GM12878 (cell line): ENCODE measurements at regions of chr7 and their contacts with region 1.

Region 1: DNA sequence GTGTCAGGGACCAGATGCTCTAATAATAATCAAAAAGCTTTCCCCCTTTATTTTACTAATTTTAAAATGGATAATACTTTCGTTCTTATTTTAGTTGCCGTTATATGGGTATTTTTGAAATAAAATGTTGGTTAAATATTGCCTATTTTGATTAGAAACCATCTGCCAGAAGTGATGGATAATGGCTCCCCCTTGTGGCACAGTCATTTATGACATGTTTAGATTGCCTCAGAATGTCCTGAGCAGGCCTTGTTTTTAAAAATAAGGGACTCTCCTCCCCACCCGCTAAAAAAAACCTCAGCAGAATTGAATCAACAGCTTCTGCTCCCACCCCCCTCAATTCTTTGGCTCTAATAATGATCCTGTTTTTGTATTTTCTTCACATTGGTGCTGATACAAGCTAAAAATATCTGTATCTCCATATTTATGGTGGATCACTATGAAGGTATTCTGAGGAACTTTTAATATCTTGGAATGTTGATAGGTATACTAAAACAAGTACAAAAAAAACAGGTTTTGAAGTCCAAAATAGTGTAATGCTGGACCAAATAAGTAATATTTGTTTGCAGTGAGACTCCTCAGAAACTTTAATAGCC is 38.8 kb downstream of the TMEM60 start:
- DNase-seq: peak; percentile 38
- ATAC-seq: peak; percentile 83
- H3K4me3 ChIP-seq: no peak overlapping the region
- H3K27ac ChIP-seq: no peak overlapping the region
- H3K4me1 ChIP-seq: peaks cover 3% of the 10 kb centered on the region; the same call in 1 of the 2 replicates
- H3K27me3 ChIP-seq: no peaks in the 10 kb centered on the region
- CTCF ChIP-seq: peak; percentile 61 to 79 (median 78)
- EP300 ChIP-seq: no peak
- POLR2A ChIP-seq: no peak
- RAD21 ChIP-seq: peak; percentile 96

Region 2: GRCh38 chr7:77674878-77675277 is 84.5 kb before region 1 on chr7:
- CTCF ChIA-PET with region 1: interaction called, 5 read pairs
- POLR2A ChIA-PET with region 1: no interaction called
- RAD21 ChIA-PET with region 1: interaction called, 6 read pairs
- SMC1A ChIA-PET with region 1: interaction called, 8 read pairs
- in situ Hi-C with region 1: no loop called
- intact Hi-C with region 1: loop called (anchors 5 kb)
- DNase-seq: no peak
- ATAC-seq: peak; percentile 74
- H3K4me3 ChIP-seq: no peak overlapping the region
- H3K27ac ChIP-seq: no peak overlapping the region
- H3K4me1 ChIP-seq: no peaks in the 10 kb centered on the region
- H3K27me3 ChIP-seq: no peaks in the 10 kb centered on the region
- CTCF ChIP-seq: no peak
- EP300 ChIP-seq: no peak
- POLR2A ChIP-seq: no peak
- RAD21 ChIP-seq: no peak

Region 3: GRCh38 chr7:77696198-77697028 is 63.0 kb before region 1 on chr7 and contains the start of gene RSBN1L:
- CTCF ChIA-PET with region 1: interaction called, 19 read pairs
- POLR2A ChIA-PET with region 1: interaction called, 9 read pairs
- RAD21 ChIA-PET with region 1: interaction called, 11 read pairs
- SMC1A ChIA-PET with region 1: interaction called, 19 read pairs
- in situ Hi-C with region 1: no loop called
- intact Hi-C with region 1: loop called (anchors 2 kb)
- DNase-seq: peak; percentile 93
- ATAC-seq: peak; percentile 95
- H3K4me3 ChIP-seq: peak within 1 kb of the TSS; percentile 100
- H3K27ac ChIP-seq: peak within 1 kb of the TSS; percentile 95
- H3K4me1 ChIP-seq: no peaks in the 10 kb centered on the region
- H3K27me3 ChIP-seq: no peaks in the 10 kb centered on the region
- CTCF ChIP-seq: peak; percentile 14 to 51 (median 37); a peak in 5 of 6 replicates
- EP300 ChIP-seq: no peak
- POLR2A ChIP-seq: peak; percentile 91
- RAD21 ChIP-seq: no peak
- polyA plus RNA-seq, gene RSBN1L: 4.6 to 6.9 TPM

Region 4: GRCh38 chr7:77702513-77702912 is 56.9 kb before region 1 on chr7:
- CTCF ChIA-PET with region 1: interaction called, 19 read pairs
- POLR2A ChIA-PET with region 1: no interaction called
- RAD21 ChIA-PET with region 1: interaction called, 11 read pairs
- SMC1A ChIA-PET with region 1: interaction called, 19 read pairs
- in situ Hi-C with region 1: no loop called
- intact Hi-C with region 1: loop called (anchors 2 kb)
- DNase-seq: no peak
- ATAC-seq: no peak
- H3K4me3 ChIP-seq: no peak overlapping the region; the same call in 1 of the 2 replicates
- H3K27ac ChIP-seq: peak overlapping the region; percentile 18; the same call in 1 of the 2 replicates
- H3K4me1 ChIP-seq: peaks cover 6% of the 10 kb centered on the region
- H3K27me3 ChIP-seq: no peaks in the 10 kb centered on the region
- CTCF ChIP-seq: no peak
- EP300 ChIP-seq: no peak
- POLR2A ChIP-seq: no peak
- RAD21 ChIP-seq: no peak

Region 5: DNA sequence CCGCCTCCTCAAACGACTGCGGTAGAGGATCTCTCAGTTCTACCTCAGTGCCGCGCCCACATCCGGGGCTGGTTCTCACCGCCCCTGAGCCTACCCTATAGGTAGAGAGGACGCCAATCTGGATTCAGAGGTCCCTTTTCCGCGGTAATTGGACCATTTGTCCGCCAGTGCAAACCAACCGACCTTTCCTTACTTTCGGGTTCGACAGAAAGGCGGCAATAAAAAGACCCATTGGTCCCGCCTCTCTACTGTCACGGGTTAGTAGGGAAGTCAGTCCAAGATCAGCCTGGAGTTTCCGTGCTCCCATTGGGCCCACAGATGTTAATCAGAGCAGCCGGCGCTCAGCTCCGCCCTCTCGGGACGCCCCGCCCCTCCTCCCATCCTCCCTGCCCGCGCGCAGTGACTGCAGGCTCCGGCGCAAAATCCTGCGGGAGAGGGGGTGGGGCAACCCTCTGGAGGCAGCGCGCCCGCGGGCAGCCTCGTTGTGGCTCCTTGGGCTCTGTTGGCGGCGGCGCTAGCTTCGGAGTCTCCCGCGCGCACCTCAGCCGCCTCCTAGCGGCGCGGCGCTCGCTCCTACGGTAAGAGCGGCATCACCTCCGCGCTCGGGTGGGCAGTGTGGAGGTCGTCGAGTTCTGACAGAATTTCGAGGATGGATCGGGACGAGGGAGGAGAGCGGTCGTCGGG is 39.1 kb after region 1 on chr7 and contains the starts of genes PHTF2 and TMEM60:
- CTCF ChIA-PET with region 1: interaction called, 11 read pairs
- POLR2A ChIA-PET with region 1: no interaction called
- RAD21 ChIA-PET with region 1: interaction called, 3 read pairs
- SMC1A ChIA-PET with region 1: no interaction called
- in situ Hi-C with region 1: no loop called
- intact Hi-C with region 1: no loop called
- DNase-seq: peak; percentile 99
- ATAC-seq: peak; percentile 92
- H3K4me3 ChIP-seq: peak within 1 kb of the TSS; percentile 94
- H3K27ac ChIP-seq: peak within 1 kb of the TSS; percentile 86
- H3K4me1 ChIP-seq: peaks cover 16% of the 10 kb centered on the region
- H3K27me3 ChIP-seq: no peaks in the 10 kb centered on the region
- CTCF ChIP-seq: peak; percentile 37 to 66 (median 50)
- EP300 ChIP-seq: 0 out of 4 replicates have a peak, but pooled peaks of 1 of the 2 experiments have one; percentile 0
- POLR2A ChIP-seq: peak; percentile 76
- RAD21 ChIP-seq: no peak
- polyA plus RNA-seq, gene PHTF2: 12.9 to 14.1 TPM
- polyA plus RNA-seq, gene TMEM60: 75.6 to 94.2 TPM

Region 6: DNA sequence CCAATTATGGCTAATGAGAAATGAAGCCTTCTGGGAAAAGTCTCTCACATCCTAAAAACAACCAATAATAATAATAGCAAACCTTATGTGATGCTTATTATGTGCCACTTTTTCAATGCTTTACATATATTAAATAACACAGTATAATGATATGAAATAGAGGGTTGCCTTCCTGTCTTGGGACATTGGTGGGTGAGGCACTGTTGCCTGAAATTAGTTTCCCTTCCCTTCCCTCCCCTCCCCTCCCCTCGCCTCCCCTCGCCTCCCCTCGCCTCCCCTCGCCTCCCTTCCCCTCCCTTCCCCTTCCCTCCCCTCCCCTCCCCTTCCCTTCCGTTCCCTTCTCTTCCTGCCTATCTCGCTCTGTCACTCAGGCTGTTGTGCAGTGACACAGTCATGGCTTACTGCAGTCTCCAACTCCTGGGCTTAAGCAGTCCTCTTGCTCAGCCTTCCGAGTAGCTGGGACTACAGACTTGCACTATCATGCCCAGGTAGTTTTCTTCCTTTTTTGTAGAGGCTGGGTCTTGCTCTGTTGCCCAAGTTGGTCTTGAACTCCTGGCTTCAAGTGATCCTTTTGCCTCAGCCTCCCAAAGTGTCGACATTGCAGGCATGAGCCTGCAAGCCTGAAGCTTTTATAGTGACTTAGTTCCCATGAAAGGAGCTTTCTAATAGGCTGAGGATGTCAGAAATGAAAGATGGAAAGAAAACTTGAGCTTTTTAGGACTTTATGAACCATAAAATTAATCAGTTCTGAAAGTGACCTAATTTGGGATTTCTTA is 87.1 kb after region 1 on chr7:
- CTCF ChIA-PET with region 1: no interaction called
- POLR2A ChIA-PET with region 1: no interaction called
- RAD21 ChIA-PET with region 1: no interaction called
- SMC1A ChIA-PET with region 1: no interaction called
- in situ Hi-C with region 1: no loop called
- intact Hi-C with region 1: no loop called
- DNase-seq: no peak
- ATAC-seq: no peak
- H3K4me3 ChIP-seq: no peak overlapping the region
- H3K27ac ChIP-seq: no peak overlapping the region
- H3K4me1 ChIP-seq: no peaks in the 10 kb centered on the region
- H3K27me3 ChIP-seq: no peaks in the 10 kb centered on the region
- CTCF ChIP-seq: no peak
- EP300 ChIP-seq: no peak
- POLR2A ChIP-seq: no peak
- RAD21 ChIP-seq: no peak

Region 7: DNA sequence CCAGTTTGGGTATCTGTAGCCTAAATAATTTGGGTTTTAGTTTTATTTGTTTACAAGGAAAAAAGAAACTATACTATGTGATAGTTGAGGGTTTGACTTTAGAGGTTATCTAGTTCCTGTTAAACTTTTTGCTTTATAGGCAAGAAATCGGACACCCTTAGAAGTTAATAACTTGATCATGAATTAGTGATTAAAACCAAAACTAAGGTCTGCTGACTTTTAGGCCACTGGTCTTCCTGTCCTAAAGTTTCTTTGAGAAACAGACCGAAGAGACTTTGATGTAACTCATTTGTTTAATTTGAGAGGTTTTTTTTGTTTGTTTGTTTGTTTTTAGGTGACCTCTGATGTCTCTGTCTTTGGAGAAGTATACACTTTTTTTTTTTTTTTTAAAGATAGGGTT is 98.9 kb after region 1 on chr7:
- CTCF ChIA-PET with region 1: no interaction called
- POLR2A ChIA-PET with region 1: no interaction called
- RAD21 ChIA-PET with region 1: no interaction called
- SMC1A ChIA-PET with region 1: no interaction called
- in situ Hi-C with region 1: no loop called
- intact Hi-C with region 1: no loop called
- DNase-seq: no peak
- ATAC-seq: peak; percentile 81
- H3K4me3 ChIP-seq: 0 out of 2 replicates have a peak overlapping the region, but pooled peaks have one; percentile 1
- H3K27ac ChIP-seq: peak overlapping the region; percentile 62; the same call in 1 of the 2 replicates
- H3K4me1 ChIP-seq: peaks cover 20% of the 10 kb centered on the region
- H3K27me3 ChIP-seq: no peaks in the 10 kb centered on the region
- CTCF ChIP-seq: no peak
- EP300 ChIP-seq: no peak
- POLR2A ChIP-seq: no peak
- RAD21 ChIP-seq: no peak

Region 8: DNA sequence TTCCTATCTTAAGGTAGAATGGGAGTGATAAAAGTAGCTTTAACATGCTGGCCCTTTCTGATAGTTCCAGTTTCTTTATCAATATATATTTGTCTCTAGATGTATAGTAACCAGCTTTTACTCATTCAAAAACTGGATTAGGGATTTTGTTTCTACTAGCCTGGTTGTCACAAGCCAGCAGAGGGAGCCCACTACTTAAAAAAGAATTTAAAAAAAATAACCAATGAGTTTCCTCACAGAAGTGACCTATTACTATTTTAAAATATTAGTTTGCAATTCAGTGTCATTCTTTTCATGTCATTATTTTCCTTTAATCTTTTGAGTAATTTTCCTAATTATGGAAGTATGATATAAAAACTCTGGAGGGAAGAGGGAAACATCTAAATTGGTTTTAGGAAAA is 181.3 kb after region 1 on chr7:
- CTCF ChIA-PET with region 1: interaction called, 13 read pairs
- POLR2A ChIA-PET with region 1: no interaction called
- RAD21 ChIA-PET with region 1: interaction called, 6 read pairs
- SMC1A ChIA-PET with region 1: interaction called, 4 read pairs
- in situ Hi-C with region 1: no loop called
- intact Hi-C with region 1: loop called (anchors 5 kb)
- DNase-seq: no peak
- ATAC-seq: peak; percentile 75
- H3K4me3 ChIP-seq: no peak overlapping the region
- H3K27ac ChIP-seq: no peak overlapping the region
- H3K4me1 ChIP-seq: no peaks in the 10 kb centered on the region
- H3K27me3 ChIP-seq: no peaks in the 10 kb centered on the region
- CTCF ChIP-seq: peak; percentile 44 to 66 (median 53); a peak in 5 of 6 replicates
- EP300 ChIP-seq: no peak
- POLR2A ChIP-seq: no peak
- RAD21 ChIP-seq: peak; percentile 73

Region 9: DNA sequence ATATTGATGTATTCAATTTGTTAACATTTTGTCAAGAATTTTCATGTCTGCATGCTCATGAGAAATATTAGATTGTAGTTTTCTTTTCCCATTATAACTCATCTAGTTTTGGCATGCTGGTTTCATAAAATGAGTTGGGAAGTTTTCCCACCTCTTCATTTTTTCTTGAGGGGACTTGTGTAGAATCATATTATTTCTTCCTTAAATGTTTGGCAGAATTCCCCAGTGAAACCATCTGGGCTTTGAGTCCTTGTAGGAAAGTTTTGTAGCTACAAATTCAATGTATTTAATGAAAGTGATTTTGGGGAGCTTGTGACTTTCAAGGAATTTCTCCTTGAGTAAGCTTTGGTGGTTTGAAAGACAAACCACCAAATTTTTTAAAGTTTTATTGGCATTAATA is 212.3 kb after region 1 on chr7:
- CTCF ChIA-PET with region 1: no interaction called
- POLR2A ChIA-PET with region 1: no interaction called
- RAD21 ChIA-PET with region 1: no interaction called
- SMC1A ChIA-PET with region 1: no interaction called
- in situ Hi-C with region 1: no loop called
- intact Hi-C with region 1: no loop called
- DNase-seq: no peak
- ATAC-seq: no peak
- H3K4me3 ChIP-seq: no peak overlapping the region
- H3K27ac ChIP-seq: no peak overlapping the region
- H3K4me1 ChIP-seq: no peaks in the 10 kb centered on the region
- H3K27me3 ChIP-seq: no peaks in the 10 kb centered on the region
- CTCF ChIP-seq: no peak
- EP300 ChIP-seq: no peak
- POLR2A ChIP-seq: no peak
- RAD21 ChIP-seq: no peak

Region 10: GRCh38 chr7:78033410-78033809 is 274.0 kb after region 1 on chr7:
- CTCF ChIA-PET with region 1: no interaction called
- POLR2A ChIA-PET with region 1: no interaction called
- RAD21 ChIA-PET with region 1: no interaction called
- SMC1A ChIA-PET with region 1: no interaction called
- in situ Hi-C with region 1: no loop called
- intact Hi-C with region 1: no loop called
- DNase-seq: no peak
- ATAC-seq: no peak
- H3K4me3 ChIP-seq: no peak overlapping the region
- H3K27ac ChIP-seq: no peak overlapping the region
- H3K4me1 ChIP-seq: no peaks in the 10 kb centered on the region
- H3K27me3 ChIP-seq: no peaks in the 10 kb centered on the region
- CTCF ChIP-seq: no peak
- EP300 ChIP-seq: no peak
- POLR2A ChIP-seq: no peak
- RAD21 ChIP-seq: no peak